Adrenal gland (tissue), 19 donors: ENCODE measurements at regions of chr5 and their contacts with region 1.

Region 1: DNA sequence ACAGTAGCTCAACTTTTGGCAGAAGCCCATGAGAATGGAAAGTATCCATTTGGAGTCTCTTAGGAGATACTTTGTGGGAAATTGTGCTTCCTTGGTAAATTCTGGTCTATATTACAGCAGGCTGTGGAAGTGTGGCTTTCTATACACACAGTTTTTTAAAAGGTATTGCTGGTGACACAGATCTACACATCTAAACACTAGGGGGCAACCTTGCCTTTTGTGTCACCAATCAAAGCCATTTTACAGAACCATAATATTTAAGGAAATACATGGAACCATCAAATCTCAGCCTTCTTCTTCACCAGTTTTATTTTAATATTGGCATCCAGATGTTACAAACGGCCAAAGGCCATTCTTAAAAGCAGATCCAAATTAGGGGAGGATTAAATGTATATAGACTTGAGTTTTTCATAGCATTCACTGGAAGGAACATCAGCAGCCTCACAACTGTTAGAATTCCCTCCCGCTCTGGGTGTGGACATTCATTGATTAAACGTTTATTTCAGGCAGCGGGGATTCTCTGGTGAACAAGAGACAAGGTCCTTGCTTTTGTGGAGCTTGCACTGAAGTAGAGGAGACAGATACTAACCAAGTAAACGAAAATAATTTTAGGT is 132.4 kb upstream of the EPB41L4A start:
- DNase-seq: peak; percentile 23 to 66 (median 48)
- H3K4me3 ChIP-seq: no peak overlapping the region
- H3K27ac ChIP-seq: no peak overlapping the region
- H3K4me1 ChIP-seq: peaks cover 0 to 4% of the 10 kb centered on the region in 2 donors
- H3K27me3 ChIP-seq: no peaks in the 10 kb centered on the region
- CTCF ChIP-seq: peak; percentile 65 to 89 (median 80)
- POLR2A ChIP-seq: no peak

Region 2: GRCh38 chr5:112034421-112034979 is 517.0 kb before region 1 on chr5:
- intact Hi-C with region 1: no loop called
- DNase-seq: no peak
- H3K4me3 ChIP-seq: no peak overlapping the region
- H3K27ac ChIP-seq: no peak overlapping the region
- H3K4me1 ChIP-seq: no peaks in the 10 kb centered on the region
- H3K27me3 ChIP-seq: no peaks in the 10 kb centered on the region
- CTCF ChIP-seq: no peak
- POLR2A ChIP-seq: no peak

Region 3: GRCh38 chr5:112757468-112758208 is 206.1 kb after region 1 on chr5:
- intact Hi-C with region 1: loop called (anchors 2 to 5 kb)
- DNase-seq: no peak
- H3K4me3 ChIP-seq: peak overlapping the region in 1 of 4 donors; percentile 40
- H3K27ac ChIP-seq: no peak overlapping the region
- H3K4me1 ChIP-seq: peaks cover 0 to 4% of the 10 kb centered on the region in 2 donors
- H3K27me3 ChIP-seq: no peaks in the 10 kb centered on the region
- CTCF ChIP-seq: peak; percentile 70 to 95 (median 86)
- POLR2A ChIP-seq: no peak

Region 4: DNA sequence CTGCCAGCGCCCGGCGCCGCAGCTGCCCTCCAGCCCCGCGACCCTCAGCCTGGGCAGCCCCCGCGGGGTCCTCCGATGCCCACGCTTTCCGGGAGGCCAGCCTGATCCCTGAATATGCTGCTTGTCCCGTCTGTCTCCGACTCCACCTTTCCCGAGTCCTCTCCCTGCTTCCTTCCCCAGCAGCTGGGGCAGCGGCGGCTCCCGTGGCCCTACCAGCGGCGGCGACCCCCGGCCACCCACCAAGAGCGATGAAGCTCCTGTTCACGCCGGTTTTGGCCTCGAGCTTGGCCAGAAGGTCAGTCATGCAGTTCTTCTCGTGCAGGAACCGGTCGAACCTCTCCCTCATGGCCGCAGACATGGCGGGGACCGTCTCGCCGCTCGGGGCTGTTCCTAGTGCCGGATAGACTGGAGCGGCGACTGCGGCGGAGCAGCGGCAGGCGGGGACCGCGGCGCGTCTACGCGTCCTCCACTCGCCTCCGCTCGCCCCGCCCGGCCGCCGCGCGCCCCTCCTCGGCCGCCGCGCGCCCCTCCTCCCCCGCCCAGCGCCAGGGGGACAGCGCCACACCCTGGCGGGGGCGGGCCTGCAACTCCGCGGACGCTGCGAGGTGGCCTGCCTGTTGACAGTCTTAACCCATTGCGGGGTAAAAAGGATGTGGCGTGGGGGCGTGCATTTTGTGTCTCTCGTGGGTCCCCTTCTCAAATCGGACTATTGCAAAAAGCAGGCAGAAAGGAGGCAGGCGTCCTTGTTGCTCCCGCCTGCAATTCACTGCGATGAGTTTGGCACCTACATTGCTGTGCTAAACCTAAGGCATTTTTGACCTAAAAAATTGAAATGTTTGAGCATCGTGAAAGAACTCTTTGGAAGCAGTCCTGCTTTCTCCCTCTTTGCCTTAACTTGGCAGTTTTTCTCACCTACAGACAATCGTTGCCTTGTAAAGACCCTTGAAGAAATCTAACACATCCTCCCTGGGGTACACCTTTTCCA is 370.6 kb after region 1 on chr5 and contains the start of gene REEP5:
- intact Hi-C with region 1: loop called in 1 of 2 experiments (anchors 10 kb)
- DNase-seq: peak; percentile 80 to 91 (median 87)
- H3K4me3 ChIP-seq: peak within 1 kb of the TSS; percentile 26 to 98 (median 81)
- H3K27ac ChIP-seq: peak within 1 kb of the TSS; percentile 79 to 98 (median 97)
- H3K4me1 ChIP-seq: peaks cover under 1 to 43% of the 10 kb centered on the region in 2 donors
- H3K27me3 ChIP-seq: no peaks in the 10 kb centered on the region
- CTCF ChIP-seq: peak; percentile 25 to 95 (median 72)
- POLR2A ChIP-seq: peak; percentile 94 to 97
- total RNA-seq, gene REEP5: 84.6 to 198 (median 167) TPM